ENCODE measurements at regions of chr6 and their contacts with region 1.

Region 1: GRCh38 chr6:29005183-29005885 is at the start of gene ZNF311:
- DNase-seq: peak; percentile 57
- H3K4me3 ChIP-seq: peak within 1 kb of the TSS; percentile 52 to 75 (median 63)
- H3K27ac ChIP-seq: no peak within 1 kb of the TSS
- H3K4me1 ChIP-seq: peaks cover 5% of the 10 kb centered on the region
- H3K27me3 ChIP-seq: peaks cover 2 to 14% of the 10 kb centered on the region in 2 experiments
- CTCF ChIP-seq: no peak
- POLR2A ChIP-seq: peak; percentile 62
- total RNA-seq, gene ZNF311: 0.35 and 0.55 TPM in 2 replicates

Region 2: GRCh38 chr6:28977341-28978132 is 27.8 kb before region 1 on chr6:
- CTCF ChIA-PET with region 1: no interaction called
- POLR2A ChIA-PET with region 1: no interaction called
- dilution Hi-C with region 1: no loop called
- intact Hi-C with region 1: no loop called
- DNase-seq: peak; percentile 37
- H3K4me3 ChIP-seq: peak overlapping the region; percentile 16 to 44 (median 40)
- H3K27ac ChIP-seq: peak overlapping the region; percentile 22
- H3K4me1 ChIP-seq: peaks cover 21% of the 10 kb centered on the region
- H3K27me3 ChIP-seq: no peaks in the 10 kb centered on the region
- CTCF ChIP-seq: no peak
- POLR2A ChIP-seq: no peak

Region 3: GRCh38 chr6:28988536-28989311 is 16.6 kb before region 1 on chr6:
- CTCF ChIA-PET with region 1: interaction called, 8 read pairs
- POLR2A ChIA-PET with region 1: no interaction called
- dilution Hi-C with region 1: no loop called
- intact Hi-C with region 1: loop called (anchors 2 kb)
- DNase-seq: peak; percentile 66
- H3K4me3 ChIP-seq: peak overlapping the region in 2 of 3 experiments; percentile 4 to 34
- H3K27ac ChIP-seq: no peak overlapping the region
- H3K4me1 ChIP-seq: no peaks in the 10 kb centered on the region
- H3K27me3 ChIP-seq: no peaks in the 10 kb centered on the region
- CTCF ChIP-seq: peak; percentile 73 to 79
- POLR2A ChIP-seq: no peak

Region 4: GRCh38 chr6:29092957-29093356 is 87.6 kb after region 1 on chr6:
- CTCF ChIA-PET with region 1: no interaction called
- POLR2A ChIA-PET with region 1: no interaction called
- dilution Hi-C with region 1: no loop called
- intact Hi-C with region 1: no loop called
- DNase-seq: no peak
- H3K4me3 ChIP-seq: no peak overlapping the region
- H3K27ac ChIP-seq: no peak overlapping the region
- H3K4me1 ChIP-seq: no peaks in the 10 kb centered on the region
- H3K27me3 ChIP-seq: no peaks in the 10 kb centered on the region
- CTCF ChIP-seq: no peak
- POLR2A ChIP-seq: no peak

Region 5: GRCh38 chr6:29294499-29294914 is 289.2 kb after region 1 on chr6:
- CTCF ChIA-PET with region 1: no interaction called
- POLR2A ChIA-PET with region 1: no interaction called
- dilution Hi-C with region 1: no loop called
- intact Hi-C with region 1: no loop called
- DNase-seq: no peak
- H3K4me3 ChIP-seq: no peak overlapping the region
- H3K27ac ChIP-seq: no peak overlapping the region
- H3K4me1 ChIP-seq: no peaks in the 10 kb centered on the region
- H3K27me3 ChIP-seq: no peaks in the 10 kb centered on the region
- CTCF ChIP-seq: no peak
- POLR2A ChIP-seq: no peak